Sciatic nerve (tissue), 2 donors: ENCODE measurements at regions of chrX and their contacts with region 1.

Region 1: GRCh38 chrX:122982521-122982920 is 201.6 kb upstream of the GRIA3 start:
- DNase-seq: no peak
- ATAC-seq: no peak

Region 2: GRCh38 chrX:123665197-123665596 is 682.7 kb after region 1 on chrX:
- intact Hi-C with region 1: loop called (anchors 5 kb)
- DNase-seq: no peak
- ATAC-seq: no peak